ENCODE measurements at regions of chr14 and their contacts with region 1.

Region 1: GRCh38 chr14:32393118-32393517 is 64.0 kb downstream of the AKAP6 start:
- DNase-seq: no peak
- CTCF ChIP-seq: no peak

Region 2: GRCh38 chr14:32329146-32329545 is 64.0 kb before region 1 on chr14 and contains the start of gene AKAP6:
- CTCF ChIA-PET with region 1: no interaction called
- POLR2A ChIA-PET with region 1: no interaction called
- DNase-seq: no peak
- CTCF ChIP-seq: no peak

Region 3: GRCh38 chr14:32379447-32379846 is 13.7 kb before region 1 on chr14:
- CTCF ChIA-PET with region 1: interaction called, 10 read pairs
- POLR2A ChIA-PET with region 1: no interaction called
- DNase-seq: no peak
- CTCF ChIP-seq: no peak

Region 4: GRCh38 chr14:32408018-32408417 is 14.9 kb after region 1 on chr14:
- CTCF ChIA-PET with region 1: no interaction called
- POLR2A ChIA-PET with region 1: no interaction called
- DNase-seq: no peak
- CTCF ChIP-seq: no peak